ENCODE measurements at regions of chr10 and their contacts with region 1.

Region 1: GRCh38 chr10:51759896-51760534 is 60.6 kb upstream of the CSTF2T start:
- DNase-seq: no peak
- H3K4me3 ChIP-seq: no peak overlapping the region
- H3K27ac ChIP-seq: no peak overlapping the region
- H3K4me1 ChIP-seq: peaks cover 0 to 34% (median 2%) of the 10 kb centered on the region in 4 donors
- H3K27me3 ChIP-seq: no peaks in the 10 kb centered on the region
- CTCF ChIP-seq: no peak

Region 2: DNA sequence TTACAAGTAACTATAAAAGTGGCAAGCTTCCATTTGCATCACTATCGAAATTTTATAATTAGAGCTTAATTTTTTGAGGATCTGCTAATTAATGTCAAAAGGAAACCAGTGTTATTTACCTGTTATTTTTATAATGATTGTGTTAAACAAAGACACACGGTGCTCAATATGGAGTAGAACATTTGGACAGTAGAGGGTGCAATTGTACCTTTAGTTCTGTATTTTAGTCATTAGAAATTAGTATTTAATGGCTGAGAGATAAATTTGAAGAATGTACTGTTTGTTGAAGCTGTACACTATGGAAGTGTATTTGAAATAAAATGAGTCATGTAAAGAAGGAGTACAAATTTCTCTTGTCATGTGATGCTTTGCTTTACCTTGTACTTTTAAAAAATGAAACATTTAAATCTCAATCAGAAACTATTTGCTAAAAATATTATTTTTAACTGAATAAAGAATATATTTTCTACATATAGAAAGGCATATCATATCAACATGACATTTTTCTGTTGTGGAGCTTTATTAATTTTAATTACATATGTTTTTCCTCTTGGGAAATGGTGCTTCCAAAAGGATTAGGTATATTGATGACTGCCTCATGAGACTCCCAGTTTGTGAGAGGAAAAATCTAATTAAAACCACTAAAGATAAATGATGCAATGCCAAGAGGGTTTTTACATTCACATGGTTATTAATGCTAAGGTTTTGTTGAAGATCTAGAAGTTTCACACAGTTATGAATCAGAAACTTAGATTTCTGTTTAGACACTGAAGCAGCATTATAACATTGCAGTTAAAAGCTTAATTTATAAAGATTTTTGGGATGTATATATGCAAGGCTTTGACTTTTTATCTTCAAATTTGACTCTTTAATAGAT is 696.1 kb before region 1 on chr10:
- intact Hi-C with region 1: no loop called
- DNase-seq: no peak
- H3K4me3 ChIP-seq: no peak overlapping the region
- H3K27ac ChIP-seq: no peak overlapping the region
- H3K4me1 ChIP-seq: peaks cover 0 to 43% (median 4%) of the 10 kb centered on the region in 4 donors
- H3K27me3 ChIP-seq: no peaks in the 10 kb centered on the region
- CTCF ChIP-seq: peak; percentile 50 to 53

Region 3: DNA sequence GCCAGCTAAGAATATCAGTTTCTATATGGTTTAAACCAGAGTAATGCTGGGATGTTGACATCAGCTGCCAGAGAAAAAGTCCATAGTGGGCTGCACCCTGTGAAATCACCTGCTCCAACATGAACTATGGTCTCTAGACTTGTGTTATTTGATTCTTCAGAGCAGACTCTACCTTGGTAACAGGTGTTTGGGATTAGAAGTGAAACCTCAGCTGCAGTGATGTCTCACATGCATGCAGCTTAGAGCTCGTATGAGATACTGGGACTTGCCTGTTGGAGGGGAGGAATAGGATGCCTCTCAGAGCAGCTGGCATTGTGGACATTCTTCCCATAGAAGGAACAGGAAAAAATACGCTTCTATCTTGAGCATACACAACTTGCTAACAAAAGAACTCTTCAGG is 226.5 kb after region 1 on chr10:
- intact Hi-C with region 1: no loop called
- DNase-seq: no peak
- H3K4me3 ChIP-seq: no peak overlapping the region
- H3K27ac ChIP-seq: no peak overlapping the region
- H3K4me1 ChIP-seq: peaks cover 0 to 54% (median 8%) of the 10 kb centered on the region in 4 donors
- H3K27me3 ChIP-seq: no peaks in the 10 kb centered on the region
- CTCF ChIP-seq: no peak

Region 4: DNA sequence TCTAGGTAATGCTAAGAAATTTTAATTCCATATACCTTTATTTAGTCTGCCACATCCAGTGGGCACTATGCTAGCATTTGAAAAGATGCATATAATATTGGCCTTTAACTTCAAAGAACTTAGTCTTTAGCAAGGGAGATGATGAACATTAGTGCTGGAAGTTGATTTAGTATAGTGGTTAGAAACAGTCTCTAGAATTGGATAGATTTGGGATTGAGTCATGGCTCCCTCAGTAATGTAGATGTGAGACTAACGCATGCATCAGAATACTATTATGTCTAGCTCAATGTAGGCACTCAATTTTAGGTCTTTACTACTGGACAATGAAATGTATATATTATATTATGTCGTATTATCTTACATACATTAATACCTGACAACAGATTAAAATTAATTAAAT is 559.9 kb after region 1 on chr10:
- intact Hi-C with region 1: loop called (anchors 5 kb)
- DNase-seq: no peak
- H3K4me3 ChIP-seq: no peak overlapping the region
- H3K27ac ChIP-seq: no peak overlapping the region
- H3K4me1 ChIP-seq: peaks cover 0 to 3% (median 2%) of the 10 kb centered on the region in 4 donors
- H3K27me3 ChIP-seq: peaks cover 0 to 1% of the 10 kb centered on the region in 2 donors
- CTCF ChIP-seq: no peak

Measured in tibial artery (tissue), 4 donors.